ENCODE measurements at regions of chr4 and their contacts with region 1.

Region 1: GRCh38 chr4:99949034-99949998 is 759 bp downstream of the H2AZ1 start:
- DNase-seq: peak; percentile 95
- H3K4me3 ChIP-seq: peak overlapping the region; percentile 77 to 90 (median 88)
- H3K27ac ChIP-seq: peak overlapping the region; percentile 87
- H3K4me1 ChIP-seq: peaks cover 31% of the 10 kb centered on the region
- H3K27me3 ChIP-seq: no peaks in the 10 kb centered on the region
- CTCF ChIP-seq: peak; percentile 89 to 94

Region 2: GRCh38 chr4:99088481-99089365 is 860.6 kb before region 1 on chr4 and contains the start of gene ADH5:
- CTCF ChIA-PET with region 1: no interaction called
- dilution Hi-C with region 1: no loop called
- in situ Hi-C with region 1: no loop called
- intact Hi-C with region 1: loop called (anchors 5 kb)
- DNase-seq: peak; percentile 80
- H3K4me3 ChIP-seq: peak within 1 kb of the TSS; percentile 65 to 97 (median 84)
- H3K27ac ChIP-seq: peak within 1 kb of the TSS; percentile 94
- H3K4me1 ChIP-seq: peaks cover 22% of the 10 kb centered on the region
- H3K27me3 ChIP-seq: no peaks in the 10 kb centered on the region
- CTCF ChIP-seq: no peak
- total RNA-seq, gene ADH5: 192 to 237 TPM

Region 3: GRCh38 chr4:99808260-99808857 is 141.0 kb before region 1 on chr4:
- CTCF ChIA-PET with region 1: no interaction called
- dilution Hi-C with region 1: no loop called
- in situ Hi-C with region 1: loop called in 1 of 2 experiments (anchors 5 kb)
- intact Hi-C with region 1: no loop called
- DNase-seq: peak; percentile 58
- H3K4me3 ChIP-seq: no peak overlapping the region
- H3K27ac ChIP-seq: no peak overlapping the region
- H3K4me1 ChIP-seq: no peaks in the 10 kb centered on the region
- H3K27me3 ChIP-seq: peaks cover 3% of the 10 kb centered on the region
- CTCF ChIP-seq: peak; percentile 81 to 90

Region 4: DNA sequence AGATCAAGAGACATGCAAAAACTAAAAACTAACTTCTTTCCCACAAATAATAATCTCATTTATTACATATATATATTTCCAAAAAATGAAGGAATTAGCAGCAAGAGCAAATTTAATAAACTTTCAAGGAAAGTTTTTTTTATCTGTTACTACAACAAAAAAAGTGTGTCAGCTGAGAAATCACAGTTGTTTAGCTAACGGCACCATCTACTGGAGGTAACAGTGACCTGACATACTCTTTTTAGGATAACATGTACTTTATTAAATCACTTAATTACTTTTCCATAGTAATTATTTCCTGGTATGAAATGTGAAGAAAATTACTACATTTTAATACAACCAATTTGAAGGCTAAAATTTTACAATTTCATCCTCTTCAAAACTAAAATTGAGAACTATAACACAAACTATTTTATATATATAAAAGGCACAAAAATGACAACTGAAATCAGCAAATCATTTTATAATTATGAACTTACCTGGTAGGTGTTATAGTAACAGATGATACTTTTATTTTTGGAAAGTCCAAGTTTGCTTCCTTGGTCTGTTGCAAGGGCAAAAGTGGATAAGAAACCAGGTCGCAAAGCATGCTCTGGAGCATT is 64.2 kb before region 1 on chr4:
- CTCF ChIA-PET with region 1: no interaction called
- dilution Hi-C with region 1: no loop called
- in situ Hi-C with region 1: no loop called
- intact Hi-C with region 1: loop called (anchors 2 kb)
- DNase-seq: peak; percentile 34
- H3K4me3 ChIP-seq: no peak overlapping the region
- H3K27ac ChIP-seq: no peak overlapping the region
- H3K4me1 ChIP-seq: no peaks in the 10 kb centered on the region
- H3K27me3 ChIP-seq: no peaks in the 10 kb centered on the region
- CTCF ChIP-seq: peak; percentile 60 to 61

Region 5: GRCh38 chr4:99991741-99992140 is 42.4 kb after region 1 on chr4:
- CTCF ChIA-PET with region 1: no interaction called
- dilution Hi-C with region 1: no loop called
- in situ Hi-C with region 1: no loop called
- intact Hi-C with region 1: loop called (anchors 1 kb)
- DNase-seq: no peak
- H3K4me3 ChIP-seq: no peak overlapping the region
- H3K27ac ChIP-seq: no peak overlapping the region
- H3K4me1 ChIP-seq: no peaks in the 10 kb centered on the region
- H3K27me3 ChIP-seq: no peaks in the 10 kb centered on the region
- CTCF ChIP-seq: no peak